K562 (cell line): ENCODE measurements at regions of chr12 and their contacts with region 1.

Region 1: DNA sequence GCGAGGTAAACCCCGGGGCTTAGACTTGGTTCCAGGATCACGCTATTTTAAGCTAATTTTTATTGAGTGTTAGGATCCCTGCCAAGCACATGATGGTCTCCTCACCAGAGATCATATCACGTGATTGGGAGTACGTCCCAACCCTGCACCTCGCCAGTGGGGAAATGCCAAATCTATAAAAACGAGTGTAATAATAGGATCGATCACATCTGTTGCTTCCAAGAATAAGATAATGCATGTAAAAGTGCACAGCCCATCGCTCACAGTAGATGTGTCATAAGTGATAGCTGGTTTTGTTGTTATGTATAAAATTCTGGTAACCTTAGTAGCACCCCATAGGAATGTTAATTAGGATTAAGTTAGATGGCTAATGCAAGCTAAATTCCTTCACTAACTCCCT is 581.0 kb upstream of the TMEM132C start:
- DNase-seq: no peak
- ATAC-seq: no peak
- H3K4me3 ChIP-seq: no peak overlapping the region
- H3K27ac ChIP-seq: no peak overlapping the region
- H3K4me1 ChIP-seq: no peaks in the 10 kb centered on the region
- H3K27me3 ChIP-seq: no peaks in the 10 kb centered on the region
- CTCF ChIP-seq: no peak
- EP300 ChIP-seq: no peak
- POLR2A ChIP-seq: no peak
- RAD21 ChIP-seq: no peak

Region 2: DNA sequence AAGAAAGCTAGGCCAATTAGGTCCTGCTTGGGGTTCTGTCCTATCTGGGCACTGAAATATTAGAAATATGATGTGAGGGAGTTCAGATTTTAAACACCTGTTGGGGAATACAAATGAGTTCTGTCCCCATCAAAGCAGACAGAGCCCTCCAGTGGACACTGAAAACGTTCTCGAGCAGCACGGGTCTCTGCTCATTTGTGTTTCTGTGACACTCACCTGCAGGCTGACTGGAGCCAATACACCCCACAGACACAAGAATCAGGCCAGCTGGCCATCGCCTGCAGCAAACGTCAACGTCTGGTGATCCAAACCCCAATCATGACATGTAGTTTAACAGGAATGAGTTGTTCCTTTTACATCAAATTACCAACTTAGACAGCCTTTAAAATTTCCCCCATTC is 87.6 kb after region 1 on chr12:
- CTCF ChIA-PET with region 1: no interaction called
- POLR2A ChIA-PET with region 1: no interaction called
- in situ Hi-C with region 1: no loop called
- intact Hi-C with region 1: no loop called
- DNase-seq: peak in 1 of 4 experiments; percentile 1
- ATAC-seq: no peak
- H3K4me3 ChIP-seq: no peak overlapping the region
- H3K27ac ChIP-seq: no peak overlapping the region
- H3K4me1 ChIP-seq: no peaks in the 10 kb centered on the region
- H3K27me3 ChIP-seq: no peaks in the 10 kb centered on the region
- CTCF ChIP-seq: peak in 1 of 3 experiments; percentile 8; a peak in 1 of 6 replicates
- EP300 ChIP-seq: no peak
- POLR2A ChIP-seq: no peak
- RAD21 ChIP-seq: no peak

Region 3: GRCh38 chr12:128069359-128069997 is 383.5 kb after region 1 on chr12:
- CTCF ChIA-PET with region 1: no interaction called
- POLR2A ChIA-PET with region 1: no interaction called
- in situ Hi-C with region 1: no loop called
- intact Hi-C with region 1: loop called (anchors 10 kb)
- DNase-seq: peak; percentile 26 to 65 (median 50)
- ATAC-seq: peak; percentile 72
- H3K4me3 ChIP-seq: no peak overlapping the region
- H3K27ac ChIP-seq: no peak overlapping the region
- H3K4me1 ChIP-seq: no peaks in the 10 kb centered on the region
- H3K27me3 ChIP-seq: no peaks in the 10 kb centered on the region
- CTCF ChIP-seq: peak; percentile 53 to 66 (median 66)
- EP300 ChIP-seq: no peak
- POLR2A ChIP-seq: no peak
- RAD21 ChIP-seq: peak; percentile 41 to 73